Calu3 (cell line): ENCODE measurements at regions of chr4 and their contacts with region 1.

Region 1: GRCh38 chr4:122666527-122667245 is 45.8 kb upstream of the IL21 start:
- DNase-seq: peak; percentile 6
- H3K4me3 Mint-ChIP-seq: no peak overlapping the region
- H3K27ac Mint-ChIP-seq: no peak overlapping the region
- H3K4me1 Mint-ChIP-seq: peaks cover 28% of the 10 kb centered on the region
- H3K27me3 Mint-ChIP-seq: no peaks in the 10 kb centered on the region
- CTCF ChIP-seq: no peak

Region 2: GRCh38 chr4:122716825-122717448 is 50.3 kb after region 1 on chr4:
- CTCF ChIA-PET with region 1: no interaction called
- intact Hi-C with region 1: loop called (anchors 2 kb)
- DNase-seq: peak; percentile 72
- H3K4me3 Mint-ChIP-seq: no peak overlapping the region
- H3K27ac Mint-ChIP-seq: no peak overlapping the region
- H3K4me1 Mint-ChIP-seq: no peaks in the 10 kb centered on the region
- H3K27me3 Mint-ChIP-seq: no peaks in the 10 kb centered on the region
- CTCF ChIP-seq: peak; percentile 34